Esophagus squamous epithelium (tissue), 5 donors: ENCODE measurements at regions of chr10 and their contacts with region 1.

Region 1: DNA sequence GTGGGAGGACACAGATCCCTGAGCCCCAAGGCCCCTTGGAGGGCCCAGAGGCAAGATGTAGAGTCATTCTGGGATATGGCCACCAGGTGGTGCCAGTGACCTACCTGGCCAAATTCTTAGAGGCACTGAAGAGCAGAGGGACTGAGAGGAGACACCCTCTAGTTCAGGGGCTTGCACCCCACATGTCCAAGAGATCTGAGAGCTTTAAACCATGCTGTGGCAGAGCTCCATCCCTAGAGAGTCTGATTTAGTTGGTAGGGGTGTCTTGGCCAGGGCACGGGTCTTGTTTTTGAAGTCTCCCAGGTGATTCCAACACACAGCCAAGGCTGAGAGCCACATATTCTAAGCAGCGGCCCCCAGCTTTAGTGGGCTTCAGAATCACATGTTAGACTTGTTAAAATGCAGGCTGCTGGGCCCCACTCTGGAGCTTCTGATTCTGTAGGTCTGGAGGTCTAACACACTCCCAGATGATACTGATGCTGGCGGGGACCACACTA is 52.5 kb downstream of the PRF1 start:
- DNase-seq: no peak
- H3K4me3 ChIP-seq: no peak overlapping the region
- H3K27ac ChIP-seq: no peak overlapping the region
- H3K4me1 ChIP-seq: peaks cover 0 to 7% (median 5%) of the 10 kb centered on the region in 3 donors
- H3K27me3 ChIP-seq: no peaks in the 10 kb centered on the region
- CTCF ChIP-seq: peak; percentile 79 to 92 (median 86)
- POLR2A ChIP-seq: no peak

Region 2: DNA sequence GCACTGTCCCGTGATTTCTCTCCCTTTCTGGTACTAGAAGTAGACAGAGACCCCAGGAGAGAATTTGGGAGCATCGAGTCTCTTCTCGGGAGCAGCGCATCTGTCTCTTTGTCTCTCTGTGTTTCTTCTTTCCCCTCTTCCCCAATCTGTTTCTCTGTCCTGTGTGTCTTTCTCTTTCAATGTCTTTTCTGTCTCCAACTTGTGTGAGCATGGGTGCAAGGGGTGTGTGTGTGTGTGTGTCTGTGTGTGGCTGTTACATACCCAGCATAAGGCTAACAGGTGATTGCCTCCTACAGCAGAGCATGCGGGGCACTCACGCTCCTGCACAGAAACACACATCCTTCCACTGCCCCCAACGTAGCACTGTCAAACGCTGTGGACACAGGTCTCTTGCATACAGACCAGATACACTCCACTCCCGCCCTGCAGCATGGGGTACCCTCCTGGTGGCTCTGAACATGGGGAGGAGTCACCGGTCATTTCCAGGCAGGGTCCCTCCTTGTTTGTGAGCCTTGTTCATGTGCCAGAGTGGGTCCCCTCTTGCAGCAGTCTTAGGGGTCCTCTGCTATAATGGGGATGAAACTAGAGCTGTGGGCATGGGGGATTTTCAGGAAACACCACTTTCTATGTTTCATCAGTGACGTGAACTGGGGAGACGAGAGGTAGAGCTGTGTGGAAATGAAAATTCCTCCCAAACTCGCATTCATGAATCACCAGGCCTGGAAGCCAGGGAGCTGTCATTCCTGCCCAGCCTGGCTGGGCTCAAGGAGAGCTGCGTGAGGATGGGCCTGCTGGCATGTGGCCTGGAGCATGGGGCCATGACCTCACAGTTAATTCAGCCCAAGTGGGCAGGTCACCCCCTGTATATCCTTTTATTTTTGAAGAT is 123.3 kb after region 1 on chr10:
- intact Hi-C with region 1: no loop called
- DNase-seq: no peak
- H3K4me3 ChIP-seq: peak overlapping the region; percentile 22 to 59 (median 42)
- H3K27ac ChIP-seq: peak overlapping the region in 3 of 4 donors; percentile 3 to 48 (median 34)
- H3K4me1 ChIP-seq: peaks cover 28 to 40% (median 33%) of the 10 kb centered on the region in 3 donors
- H3K27me3 ChIP-seq: peaks cover 0 to 61% (median 0%) of the 10 kb centered on the region in 4 donors
- CTCF ChIP-seq: no peak
- POLR2A ChIP-seq: no peak

Region 3: GRCh38 chr10:70758757-70759514 is 208.9 kb after region 1 on chr10:
- intact Hi-C with region 1: loop called (anchors 2 kb)
- DNase-seq: no peak
- H3K4me3 ChIP-seq: no peak overlapping the region
- H3K27ac ChIP-seq: no peak overlapping the region
- H3K4me1 ChIP-seq: peaks cover 0 to 6% (median 0%) of the 10 kb centered on the region in 3 donors
- H3K27me3 ChIP-seq: no peaks in the 10 kb centered on the region
- CTCF ChIP-seq: peak; percentile 51 to 85 (median 71)
- POLR2A ChIP-seq: no peak